Activated CD4-positive, alpha-beta memory T cell treated with anti-CD3 and anti-CD28 coated beads for 36 hours (primary cell): ENCODE measurements at regions of chr6 and their contacts with region 1.

Region 1: GRCh38 chr6:73520688-73521350 is at the start of gene EEF1A1:
- DNase-seq: peak; percentile 100
- H3K4me3 Mint-ChIP-seq: peak within 1 kb of the TSS; percentile 98
- H3K27ac Mint-ChIP-seq: peak within 1 kb of the TSS; percentile 100
- H3K4me1 Mint-ChIP-seq: peaks cover 39% of the 10 kb centered on the region
- H3K27me3 Mint-ChIP-seq: peaks cover 17% of the 10 kb centered on the region
- total RNA-seq, gene EEF1A1: 16,691 to 17,144 TPM

Region 2: DNA sequence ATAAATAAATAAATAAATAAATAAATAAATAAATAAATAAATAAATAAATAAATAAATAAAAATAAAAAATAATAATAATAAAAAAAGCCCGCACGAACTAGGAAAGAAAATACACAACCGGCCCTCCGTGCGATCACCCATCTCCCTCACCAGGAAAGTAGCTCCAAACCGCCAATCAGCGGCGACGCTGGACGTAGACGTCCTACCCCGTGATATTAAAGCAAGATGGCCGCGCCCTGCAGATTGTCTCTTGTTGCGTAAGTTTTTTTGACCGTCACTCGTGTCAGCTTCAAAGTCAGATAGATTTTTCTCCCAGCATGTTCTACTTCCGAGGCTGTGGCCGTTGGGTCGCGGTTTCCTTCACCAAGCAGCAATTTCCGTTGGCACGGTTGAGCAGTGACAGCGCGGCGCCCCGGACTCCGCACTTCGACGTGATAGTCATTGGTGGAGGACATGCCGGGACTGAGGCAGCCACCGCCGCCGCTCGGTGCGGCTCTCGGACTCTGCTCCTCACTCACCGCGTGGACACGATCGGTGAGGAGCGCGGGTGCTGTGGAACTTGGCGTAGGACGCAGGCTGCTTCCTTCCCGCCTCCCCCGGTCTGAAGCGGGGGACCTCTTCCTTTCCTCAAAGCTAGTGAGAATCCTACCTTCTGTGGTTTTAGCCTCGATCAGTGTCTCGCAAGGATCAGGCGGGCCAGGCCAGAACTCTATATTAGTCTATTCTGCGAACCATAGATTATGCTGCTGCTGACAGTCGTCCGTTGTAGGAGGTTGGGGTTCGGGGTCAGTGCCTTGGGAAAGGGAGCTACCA is 59.1 kb before region 1 on chr6 and contains the start of gene MTO1:
- CTCF ChIA-PET with region 1: interaction called, 4 read pairs
- POLR2A ChIA-PET with region 1: interaction called, 50 read pairs
- intact Hi-C with region 1: loop called (anchors 1 kb)
- DNase-seq: peak; percentile 91
- H3K4me3 Mint-ChIP-seq: peak within 1 kb of the TSS; percentile 97
- H3K27ac Mint-ChIP-seq: peak within 1 kb of the TSS; percentile 97
- H3K4me1 Mint-ChIP-seq: peaks cover 40% of the 10 kb centered on the region
- H3K27me3 Mint-ChIP-seq: no peaks in the 10 kb centered on the region
- total RNA-seq, gene MTO1: 40.7 to 47.7 TPM

Region 3: DNA sequence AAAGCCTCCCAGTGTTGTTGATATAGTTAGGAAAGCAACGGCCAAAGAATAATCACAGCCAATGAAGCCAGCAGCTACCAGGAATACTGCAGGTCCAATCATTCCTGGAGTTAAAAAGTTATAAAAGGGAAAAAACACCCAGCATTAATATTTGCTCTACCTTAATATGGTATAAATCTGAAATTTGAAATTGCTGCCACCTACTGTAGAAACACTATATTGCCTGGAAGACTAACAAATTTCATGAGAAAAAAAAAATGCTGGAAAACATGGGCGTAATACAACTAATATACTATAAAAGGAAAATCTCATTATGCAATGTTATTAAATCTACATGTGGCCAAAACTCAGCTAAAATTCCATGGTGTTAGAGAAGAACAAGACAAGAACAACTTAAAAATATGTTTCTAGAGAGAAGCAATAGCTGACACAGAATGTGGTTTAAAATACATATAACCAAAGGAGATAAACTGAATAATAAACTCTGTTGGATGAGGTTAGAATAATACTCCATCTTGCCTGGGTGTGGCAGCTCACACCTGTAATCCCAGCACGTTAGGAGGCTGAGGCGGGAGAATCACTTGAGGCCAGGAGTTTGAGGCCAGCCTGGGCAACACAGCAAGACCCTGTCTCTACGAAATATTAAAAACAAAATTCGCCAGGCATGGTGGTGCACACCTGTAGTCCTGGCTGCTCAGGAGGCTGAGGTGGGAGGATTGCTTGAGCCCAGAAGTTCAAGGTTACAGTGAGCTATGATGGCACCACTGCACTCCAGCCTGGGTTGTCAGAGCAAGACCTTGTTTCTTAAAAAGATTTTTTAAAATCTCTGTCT is 89.8 kb after region 1 on chr6:
- CTCF ChIA-PET with region 1: interaction called, 27 read pairs
- POLR2A ChIA-PET with region 1: interaction called, 17 read pairs
- intact Hi-C with region 1: loop called (anchors 1 kb)
- DNase-seq: no peak
- H3K4me3 Mint-ChIP-seq: no peak overlapping the region
- H3K27ac Mint-ChIP-seq: no peak overlapping the region
- H3K4me1 Mint-ChIP-seq: no peaks in the 10 kb centered on the region
- H3K27me3 Mint-ChIP-seq: no peaks in the 10 kb centered on the region

Region 4: GRCh38 chr6:73695619-73696421 is 175.0 kb after region 1 on chr6 and contains the start of gene CD109:
- CTCF ChIA-PET with region 1: no interaction called
- POLR2A ChIA-PET with region 1: interaction called, 5 read pairs
- intact Hi-C with region 1: loop called (anchors 2 kb)
- DNase-seq: peak; percentile 87
- H3K4me3 Mint-ChIP-seq: peak within 1 kb of the TSS; percentile 80
- H3K27ac Mint-ChIP-seq: peak within 1 kb of the TSS; percentile 90
- H3K4me1 Mint-ChIP-seq: peaks cover 36% of the 10 kb centered on the region
- H3K27me3 Mint-ChIP-seq: peaks cover 16% of the 10 kb centered on the region
- total RNA-seq, gene CD109: 7.2 to 9.1 TPM

Region 5: GRCh38 chr6:74785236-74785635 is 1264.4 kb after region 1 on chr6:
- CTCF ChIA-PET with region 1: no interaction called
- POLR2A ChIA-PET with region 1: no interaction called
- intact Hi-C with region 1: no loop called
- DNase-seq: no peak
- H3K4me3 Mint-ChIP-seq: no peak overlapping the region
- H3K27ac Mint-ChIP-seq: no peak overlapping the region
- H3K4me1 Mint-ChIP-seq: no peaks in the 10 kb centered on the region
- H3K27me3 Mint-ChIP-seq: no peaks in the 10 kb centered on the region